MCF 10A (cell line): ENCODE measurements at regions of chr1 and their contacts with region 1.

Region 1: GRCh38 chr1:77126307-77126706 is 92.9 kb downstream of the PIGK start:
- DNase-seq: peak; percentile 68
- H3K4me3 Mint-ChIP-seq: no peak overlapping the region
- H3K27ac Mint-ChIP-seq: no peak overlapping the region
- H3K4me1 Mint-ChIP-seq: peaks cover 10% of the 10 kb centered on the region
- H3K27me3 Mint-ChIP-seq: no peaks in the 10 kb centered on the region
- CTCF ChIP-seq: peak; percentile 79

Region 2: GRCh38 chr1:75908717-75909152 is 1217.6 kb before region 1 on chr1:
- CTCF ChIA-PET with region 1: interaction called, 7 read pairs
- POLR2A ChIA-PET with region 1: no interaction called
- intact Hi-C with region 1: loop called (anchors 2 kb)
- DNase-seq: peak; percentile 72
- H3K4me3 Mint-ChIP-seq: no peak overlapping the region
- H3K27ac Mint-ChIP-seq: no peak overlapping the region
- H3K4me1 Mint-ChIP-seq: no peaks in the 10 kb centered on the region
- H3K27me3 Mint-ChIP-seq: peaks cover 33% of the 10 kb centered on the region
- CTCF ChIP-seq: peak; percentile 63

Region 3: DNA sequence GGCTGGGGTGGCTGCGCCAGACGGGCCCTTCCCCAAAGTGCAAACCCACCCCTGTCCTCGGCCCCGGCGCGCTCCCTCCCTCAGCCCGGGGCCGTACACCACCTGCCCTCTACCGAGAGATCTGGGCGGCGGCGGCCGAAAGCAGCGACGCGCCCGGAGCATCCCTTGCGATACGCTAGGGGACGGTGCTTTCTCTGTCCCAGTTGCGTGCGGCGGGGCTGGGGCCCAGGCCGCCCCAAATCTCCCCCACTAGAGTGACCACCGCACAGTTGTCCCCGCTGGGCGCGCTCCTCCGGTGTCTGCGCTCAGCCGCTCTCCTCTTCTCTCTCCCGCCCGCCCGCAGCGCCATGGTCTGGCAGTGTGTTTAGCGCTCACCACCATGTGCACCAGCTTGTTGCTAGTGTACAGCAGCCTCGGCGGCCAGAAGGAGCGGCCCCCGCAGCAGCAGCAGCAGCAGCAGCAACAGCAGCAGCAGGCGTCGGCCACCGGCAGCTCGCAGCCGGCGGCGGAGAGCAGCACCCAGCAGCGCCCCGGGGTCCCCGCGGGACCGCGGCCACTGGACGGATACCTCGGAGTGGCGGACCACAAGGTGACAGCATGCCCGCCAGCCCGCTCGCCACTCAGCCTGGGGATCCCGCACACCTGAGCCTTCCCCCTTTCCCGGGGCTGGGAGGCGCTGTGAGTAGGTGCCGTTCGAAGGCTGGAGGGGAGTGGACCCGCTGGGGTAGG is 258.0 kb before region 1 on chr1:
- CTCF ChIA-PET with region 1: interaction called, 3 read pairs
- POLR2A ChIA-PET with region 1: no interaction called
- intact Hi-C with region 1: loop called (anchors 1 kb)
- DNase-seq: peak; percentile 21
- H3K4me3 Mint-ChIP-seq: peak overlapping the region; percentile 64
- H3K27ac Mint-ChIP-seq: no peak overlapping the region
- H3K4me1 Mint-ChIP-seq: no peaks in the 10 kb centered on the region
- H3K27me3 Mint-ChIP-seq: peaks cover 39% of the 10 kb centered on the region
- CTCF ChIP-seq: peak; percentile 32

Region 4: DNA sequence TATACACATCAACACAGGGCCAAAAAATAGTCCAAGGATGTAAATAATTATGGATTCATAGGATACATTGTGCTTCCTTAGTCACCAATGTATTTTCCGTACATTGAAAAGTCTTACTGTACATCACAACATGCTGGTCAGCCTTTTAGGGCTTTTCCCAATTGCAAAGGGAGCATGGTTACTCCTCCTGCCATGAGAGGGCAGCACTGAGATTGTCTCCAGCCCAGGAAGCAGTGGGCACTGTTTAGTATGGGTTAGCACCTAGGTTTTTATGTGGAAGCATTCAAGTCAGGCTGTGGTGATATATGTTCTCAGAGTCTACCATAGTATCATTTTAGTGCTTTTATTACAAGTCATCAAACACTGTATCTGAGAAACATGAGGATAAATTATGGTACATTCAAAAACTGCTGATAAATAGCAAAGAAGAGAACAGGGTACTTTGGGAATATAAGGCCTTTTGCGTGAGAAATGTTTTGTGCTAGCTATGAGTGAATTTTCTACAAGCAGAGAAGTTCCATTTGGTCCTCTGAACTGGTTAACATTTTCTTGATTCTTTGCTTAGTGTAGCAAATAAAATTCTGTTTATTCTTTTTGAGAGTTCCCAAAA is 225.0 kb before region 1 on chr1:
- CTCF ChIA-PET with region 1: interaction called, 5 read pairs
- POLR2A ChIA-PET with region 1: no interaction called
- intact Hi-C with region 1: loop called (anchors 1 kb)
- DNase-seq: peak; percentile 69
- H3K4me3 Mint-ChIP-seq: no peak overlapping the region
- H3K27ac Mint-ChIP-seq: no peak overlapping the region
- H3K4me1 Mint-ChIP-seq: no peaks in the 10 kb centered on the region
- H3K27me3 Mint-ChIP-seq: no peaks in the 10 kb centered on the region
- CTCF ChIP-seq: peak; percentile 53

Region 5: DNA sequence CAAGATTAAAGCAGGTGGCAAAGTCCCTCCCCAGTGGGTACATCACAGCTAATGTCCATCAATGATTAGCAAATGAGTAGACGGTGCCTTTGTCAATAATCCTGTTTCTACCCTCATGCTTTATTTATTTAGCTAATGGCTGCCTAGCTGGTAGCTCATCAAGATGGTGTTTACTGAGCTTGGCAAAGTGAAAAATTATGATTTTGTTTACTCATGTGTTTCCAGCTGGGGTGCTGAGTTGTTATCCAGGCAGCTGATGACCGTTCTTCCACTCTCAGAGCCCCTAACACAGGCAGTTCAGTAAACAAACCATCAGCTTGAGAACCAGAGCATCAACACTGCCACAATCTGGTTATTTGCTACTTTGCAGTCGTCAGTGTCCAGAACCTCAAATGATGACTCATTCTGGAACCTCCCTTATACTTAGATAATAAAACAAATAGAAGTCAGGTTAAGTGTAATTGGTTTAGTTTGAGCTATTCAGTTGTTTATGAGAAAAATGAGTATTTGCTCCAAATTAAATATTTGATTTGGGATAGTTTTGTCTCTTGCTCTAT is 95.1 kb before region 1 on chr1:
- CTCF ChIA-PET with region 1: no interaction called
- POLR2A ChIA-PET with region 1: no interaction called
- intact Hi-C with region 1: loop called (anchors 10 kb)
- DNase-seq: peak; percentile 63
- H3K4me3 Mint-ChIP-seq: no peak overlapping the region
- H3K27ac Mint-ChIP-seq: no peak overlapping the region
- H3K4me1 Mint-ChIP-seq: peaks cover 5% of the 10 kb centered on the region
- H3K27me3 Mint-ChIP-seq: no peaks in the 10 kb centered on the region
- CTCF ChIP-seq: peak; percentile 22

Region 6: DNA sequence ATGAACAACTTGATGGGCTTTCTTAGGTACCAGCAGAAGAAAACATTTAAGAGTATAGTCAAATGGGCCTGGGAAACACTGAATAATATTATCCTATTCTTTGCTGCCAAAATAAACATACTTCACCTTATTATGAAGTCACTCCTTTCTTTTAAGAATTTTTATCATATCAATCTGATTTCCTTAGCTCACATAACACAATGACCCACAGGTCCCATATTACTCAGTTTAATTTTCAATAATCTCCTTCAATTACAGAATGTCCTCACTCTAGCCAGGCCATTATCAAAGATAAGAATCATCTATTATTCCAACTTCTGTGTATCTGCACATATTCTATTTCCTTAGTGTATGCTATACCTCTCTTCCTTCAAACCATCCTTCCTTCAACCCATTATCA is 29.9 kb after region 1 on chr1:
- CTCF ChIA-PET with region 1: no interaction called
- POLR2A ChIA-PET with region 1: no interaction called
- intact Hi-C with region 1: no loop called
- DNase-seq: no peak
- H3K4me3 Mint-ChIP-seq: no peak overlapping the region
- H3K27ac Mint-ChIP-seq: no peak overlapping the region
- H3K4me1 Mint-ChIP-seq: peaks cover 2% of the 10 kb centered on the region
- H3K27me3 Mint-ChIP-seq: no peaks in the 10 kb centered on the region
- CTCF ChIP-seq: no peak

Region 7: DNA sequence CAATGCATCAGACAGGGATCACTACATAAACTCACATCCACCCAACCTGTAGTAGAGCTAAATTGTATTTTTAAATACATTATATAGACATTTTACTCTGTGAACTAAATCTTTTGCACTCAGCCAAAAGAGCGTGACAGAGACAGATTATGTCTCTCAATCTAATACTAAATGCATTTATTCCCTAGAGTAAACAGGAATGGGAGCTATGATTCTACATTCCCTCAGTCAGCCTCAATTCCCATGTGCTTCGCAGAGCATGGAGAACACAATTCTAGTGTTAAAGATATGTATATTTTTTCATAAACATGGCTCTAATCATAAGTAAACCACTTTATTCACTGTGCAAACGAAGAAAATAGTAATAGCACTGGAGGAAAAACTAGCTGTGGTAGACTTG is 76.4 kb after region 1 on chr1:
- CTCF ChIA-PET with region 1: no interaction called
- POLR2A ChIA-PET with region 1: no interaction called
- intact Hi-C with region 1: no loop called
- DNase-seq: no peak
- H3K4me3 Mint-ChIP-seq: no peak overlapping the region
- H3K27ac Mint-ChIP-seq: no peak overlapping the region
- H3K4me1 Mint-ChIP-seq: no peaks in the 10 kb centered on the region
- H3K27me3 Mint-ChIP-seq: no peaks in the 10 kb centered on the region
- CTCF ChIP-seq: no peak